Right cardiac atrium (tissue), 5 donors: ENCODE measurements at regions of chr1 and their contacts with region 1.

Region 1: GRCh38 chr1:112466078-112466660 is 42.6 kb upstream of the WNT2B start:
- DNase-seq: peak; percentile 97 to 98 (median 98)
- ATAC-seq: peak; percentile 92 to 93
- H3K4me3 ChIP-seq: peak overlapping the region; percentile 36
- H3K27ac ChIP-seq: peak overlapping the region; percentile 76
- H3K4me1 ChIP-seq: no peaks in the 10 kb centered on the region
- H3K27me3 ChIP-seq: no peaks in the 10 kb centered on the region

Region 2: DNA sequence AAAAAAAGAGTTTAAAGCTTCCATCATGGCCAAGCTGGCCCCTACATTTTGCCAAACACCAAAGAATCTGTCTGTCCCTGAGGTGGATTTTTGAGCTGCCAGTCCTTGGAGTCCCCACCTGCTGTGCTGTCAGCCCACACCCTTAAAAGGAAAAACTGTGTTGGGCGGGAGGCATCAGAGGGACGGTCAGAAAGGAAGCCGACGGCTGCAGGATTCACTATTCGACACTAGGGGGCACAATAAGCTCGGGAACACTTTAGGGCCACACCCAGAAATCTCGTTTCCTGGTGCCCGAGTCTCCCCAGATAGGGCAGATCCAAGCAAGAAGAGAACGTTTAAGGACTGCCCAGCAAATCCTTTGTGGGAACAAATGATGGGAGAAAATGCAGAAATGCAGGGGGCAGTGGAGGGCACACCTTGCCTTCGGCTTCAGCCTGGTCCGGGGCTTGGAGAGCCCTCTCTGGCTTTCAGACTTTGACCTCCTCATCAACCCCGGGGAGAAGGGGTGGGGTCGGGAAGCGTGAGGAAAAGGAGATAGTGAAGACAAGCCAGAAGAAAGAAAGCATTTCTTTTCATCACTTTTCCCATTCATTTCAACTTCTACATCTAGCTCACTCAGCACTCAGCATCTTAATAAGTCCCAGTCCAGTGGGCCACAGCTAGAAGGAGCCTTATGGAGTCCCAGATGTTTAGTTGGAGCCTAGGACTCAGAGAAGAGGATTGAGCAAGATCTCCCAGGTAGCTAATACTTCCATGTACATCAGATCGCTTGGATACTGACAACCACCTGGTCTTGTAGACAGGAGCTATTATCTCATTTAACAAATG is 75.2 kb before region 1 on chr1:
- intact Hi-C with region 1: loop called (anchors 1 to 5 kb)
- DNase-seq: peak; percentile 88 to 95 (median 91)
- ATAC-seq: peak; percentile 68 to 84
- H3K4me3 ChIP-seq: peak overlapping the region; percentile 60
- H3K27ac ChIP-seq: peak overlapping the region; percentile 93
- H3K4me1 ChIP-seq: peaks cover 6% of the 10 kb centered on the region
- H3K27me3 ChIP-seq: no peaks in the 10 kb centered on the region

Region 3: GRCh38 chr1:112395821-112396652 is 70.1 kb before region 1 on chr1 and contains the start of gene CTTNBP2NL:
- intact Hi-C with region 1: loop called in 3 of 4 experiments (anchors 2 to 5 kb)
- DNase-seq: peak; percentile 98 to 99 (median 98)
- ATAC-seq: peak; percentile 93 to 96
- H3K4me3 ChIP-seq: peak within 1 kb of the TSS; percentile 91
- H3K27ac ChIP-seq: peak within 1 kb of the TSS; percentile 94
- H3K4me1 ChIP-seq: peaks cover 6% of the 10 kb centered on the region
- H3K27me3 ChIP-seq: no peaks in the 10 kb centered on the region
- total RNA-seq, gene CTTNBP2NL: 16.2 to 24.9 (median 16.8) TPM

Region 4: DNA sequence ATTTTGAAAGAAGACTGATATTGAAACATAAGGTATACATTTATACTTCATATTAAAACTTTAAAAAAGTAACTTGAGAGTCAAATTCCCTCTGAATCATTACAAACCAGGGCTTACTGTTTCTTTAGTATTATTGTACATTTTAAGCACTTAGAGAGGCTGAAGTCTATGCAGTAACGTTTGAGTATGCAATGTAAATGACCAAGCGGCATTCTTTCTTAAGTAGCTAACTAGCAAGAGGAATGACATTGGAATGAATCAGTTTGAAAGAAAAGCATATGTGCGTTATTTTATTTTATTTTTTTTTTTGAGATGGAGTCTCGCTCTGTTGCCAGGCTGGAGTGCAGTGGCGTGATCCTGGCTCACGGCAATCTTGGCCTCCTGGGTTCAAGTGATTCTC is 66.9 kb after region 1 on chr1:
- intact Hi-C with region 1: no loop called
- DNase-seq: no peak
- ATAC-seq: no peak
- H3K4me3 ChIP-seq: no peak overlapping the region
- H3K27ac ChIP-seq: no peak overlapping the region
- H3K4me1 ChIP-seq: no peaks in the 10 kb centered on the region
- H3K27me3 ChIP-seq: no peaks in the 10 kb centered on the region